ENCODE measurements at regions of chr20 and their contacts with region 1.

Region 1: DNA sequence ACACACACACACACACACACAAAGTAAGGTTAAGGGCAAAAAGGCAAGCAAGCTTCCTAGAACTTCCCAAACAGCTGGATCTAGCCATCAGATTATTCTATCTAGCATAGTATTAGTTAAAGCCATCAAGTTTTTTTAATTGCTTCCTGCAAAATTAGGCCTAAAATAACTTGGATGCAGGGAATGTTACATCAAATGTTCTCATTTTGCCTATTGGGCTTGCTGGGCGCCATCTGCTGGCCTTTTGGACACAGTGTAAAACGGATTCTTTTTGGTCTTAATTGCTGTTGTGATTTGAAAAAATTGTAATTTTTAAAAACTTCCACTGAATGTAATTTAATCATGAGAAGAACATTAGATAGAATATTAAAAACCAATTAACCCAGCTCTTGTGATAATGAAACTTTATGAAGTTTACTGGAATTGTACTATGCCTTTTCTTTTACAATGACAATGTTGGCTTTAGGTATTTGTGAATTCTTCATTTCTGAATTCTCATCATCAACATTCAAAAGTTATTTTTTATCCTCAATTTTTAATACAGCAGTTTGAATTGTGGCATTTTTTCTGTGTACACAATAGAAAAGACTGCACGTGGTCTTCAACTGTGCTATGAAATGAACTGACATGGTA is 6.8 kb downstream of the MKKS start:
- DNase-seq: peak; percentile 81
- H3K4me3 ChIP-seq: no peak overlapping the region
- H3K27ac ChIP-seq: peak overlapping the region; percentile 21
- H3K4me1 ChIP-seq: peaks cover 49% of the 10 kb centered on the region
- H3K27me3 ChIP-seq: no peaks in the 10 kb centered on the region
- CTCF ChIP-seq: peak; percentile 96

Region 2: DNA sequence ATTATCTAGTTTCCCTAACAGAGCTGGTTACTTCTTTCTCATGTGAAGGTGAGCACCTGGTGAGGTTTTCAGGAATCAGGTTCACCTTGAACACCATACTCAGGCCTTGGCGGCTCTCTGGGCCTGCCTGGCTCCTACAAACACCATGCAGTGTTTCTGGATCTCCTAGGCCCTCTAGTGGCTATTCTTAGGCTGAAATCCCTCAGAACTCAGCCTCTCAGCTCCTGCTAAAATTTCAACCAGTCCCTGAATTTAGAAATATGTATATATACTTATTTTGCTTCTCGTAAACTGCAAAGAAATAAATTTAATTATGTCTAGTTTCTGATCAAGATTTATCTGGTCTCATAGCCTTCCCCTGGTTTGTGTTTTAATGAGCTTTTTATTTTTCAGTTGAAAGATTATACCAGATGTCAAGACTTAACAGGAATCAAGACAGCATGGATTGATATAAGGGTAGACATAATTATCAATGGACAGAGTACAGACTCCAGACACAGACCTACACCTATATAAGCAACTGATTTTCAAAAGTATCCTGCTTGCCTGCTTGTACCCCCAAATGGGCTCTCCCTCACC is 336.5 kb before region 1 on chr20:
- CTCF ChIA-PET with region 1: no interaction called
- POLR2A ChIA-PET with region 1: no interaction called
- intact Hi-C with region 1: loop called (anchors 10 kb)
- DNase-seq: peak; percentile 66
- H3K4me3 ChIP-seq: no peak overlapping the region
- H3K27ac ChIP-seq: no peak overlapping the region
- H3K4me1 ChIP-seq: no peaks in the 10 kb centered on the region
- H3K27me3 ChIP-seq: no peaks in the 10 kb centered on the region
- CTCF ChIP-seq: peak; percentile 79

Region 3: DNA sequence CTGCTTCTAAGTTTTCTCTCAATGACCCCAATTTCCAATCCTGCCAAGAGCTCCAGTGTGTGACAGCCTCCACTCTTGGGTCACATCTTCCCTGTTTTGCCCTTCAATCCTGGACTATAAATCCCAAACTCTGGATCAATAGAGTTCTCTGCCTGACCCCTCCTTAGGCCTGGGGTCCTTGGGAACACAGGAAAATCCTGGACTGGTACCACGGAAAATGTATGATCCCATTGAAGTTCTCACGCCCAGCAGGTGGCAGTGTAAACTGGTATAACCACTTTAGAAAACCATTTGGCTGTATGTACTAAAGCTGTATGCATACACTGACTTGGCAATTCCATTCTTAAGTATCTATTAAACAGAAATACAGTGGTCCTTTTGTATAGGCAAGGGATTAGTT is 110.6 kb before region 1 on chr20:
- CTCF ChIA-PET with region 1: interaction called, 10 read pairs
- POLR2A ChIA-PET with region 1: no interaction called
- intact Hi-C with region 1: no loop called
- DNase-seq: peak; percentile 45
- H3K4me3 ChIP-seq: no peak overlapping the region
- H3K27ac ChIP-seq: no peak overlapping the region
- H3K4me1 ChIP-seq: peaks cover 13% of the 10 kb centered on the region
- H3K27me3 ChIP-seq: no peaks in the 10 kb centered on the region
- CTCF ChIP-seq: peak; percentile 46; the same call in 1 of the 2 replicates